Natural killer cell (primary cell): ENCODE measurements at regions of chr4 and their contacts with region 1.

Region 1: GRCh38 chr4:184417802-184418511 is 56.4 kb downstream of the IRF2 start:
- DNase-seq: peak in 1 of 2 donors; percentile 62
- ATAC-seq: peak; percentile 43 to 61 (median 60)
- H3K4me3 ChIP-seq: no peak overlapping the region
- H3K4me3 Mint-ChIP-seq: peak overlapping the region; percentile 43
- H3K27ac ChIP-seq: peak overlapping the region; percentile 80
- H3K27ac Mint-ChIP-seq: peak overlapping the region; percentile 87 to 92
- H3K4me1 ChIP-seq: peaks cover 22% of the 10 kb centered on the region
- H3K4me1 Mint-ChIP-seq: peaks cover 57 to 59% of the 10 kb centered on the region in 2 donors
- H3K27me3 ChIP-seq: no peaks in the 10 kb centered on the region
- H3K27me3 Mint-ChIP-seq: no peaks in the 10 kb centered on the region
- CTCF ChIP-seq: no peak

Region 2: GRCh38 chr4:183588169-183588675 is 829.7 kb before region 1 on chr4:
- intact Hi-C with region 1: no loop called
- DNase-seq: no peak
- ATAC-seq: no peak
- H3K4me3 ChIP-seq: no peak overlapping the region
- H3K4me3 Mint-ChIP-seq: no peak overlapping the region
- H3K27ac ChIP-seq: no peak overlapping the region
- H3K27ac Mint-ChIP-seq: no peak overlapping the region
- H3K4me1 ChIP-seq: no peaks in the 10 kb centered on the region
- H3K4me1 Mint-ChIP-seq: no peaks in the 10 kb centered on the region
- H3K27me3 ChIP-seq: no peaks in the 10 kb centered on the region
- H3K27me3 Mint-ChIP-seq: peaks cover 7 to 12% of the 10 kb centered on the region in 2 donors
- CTCF ChIP-seq: no peak

Region 3: DNA sequence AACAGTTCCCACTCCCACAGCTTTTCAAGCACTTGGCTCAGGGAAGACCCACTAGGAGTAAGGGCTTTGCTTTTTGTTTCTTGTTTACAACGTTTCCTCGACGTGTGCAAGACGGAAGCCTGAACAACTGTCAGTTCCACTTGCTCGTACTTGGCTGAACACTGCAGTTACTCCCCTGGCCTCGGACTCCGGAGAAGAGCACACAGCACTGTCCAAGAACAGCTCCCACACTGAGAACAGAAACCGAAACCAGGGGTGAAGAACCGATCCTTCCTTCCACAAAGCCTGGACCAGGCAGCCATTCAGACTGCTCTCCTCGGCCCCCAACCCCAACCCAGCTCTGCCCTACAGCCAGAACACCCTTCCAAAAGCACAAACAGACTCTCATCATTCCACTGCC is 30.9 kb after region 1 on chr4:
- intact Hi-C with region 1: loop called (anchors 1 kb)
- DNase-seq: peak in 1 of 2 donors; percentile 53
- ATAC-seq: peak; percentile 41 to 60 (median 43)
- H3K4me3 ChIP-seq: peak overlapping the region; percentile 4
- H3K4me3 Mint-ChIP-seq: peak overlapping the region; percentile 88
- H3K27ac ChIP-seq: peak overlapping the region; percentile 46
- H3K27ac Mint-ChIP-seq: peak overlapping the region; percentile 91 to 95
- H3K4me1 ChIP-seq: peaks cover 54% of the 10 kb centered on the region
- H3K4me1 Mint-ChIP-seq: peaks cover 88 to 92% of the 10 kb centered on the region in 2 donors
- H3K27me3 ChIP-seq: no peaks in the 10 kb centered on the region
- H3K27me3 Mint-ChIP-seq: no peaks in the 10 kb centered on the region
- CTCF ChIP-seq: no peak